ENCODE measurements at regions of chr2 and their contacts with region 1.

Region 1: DNA sequence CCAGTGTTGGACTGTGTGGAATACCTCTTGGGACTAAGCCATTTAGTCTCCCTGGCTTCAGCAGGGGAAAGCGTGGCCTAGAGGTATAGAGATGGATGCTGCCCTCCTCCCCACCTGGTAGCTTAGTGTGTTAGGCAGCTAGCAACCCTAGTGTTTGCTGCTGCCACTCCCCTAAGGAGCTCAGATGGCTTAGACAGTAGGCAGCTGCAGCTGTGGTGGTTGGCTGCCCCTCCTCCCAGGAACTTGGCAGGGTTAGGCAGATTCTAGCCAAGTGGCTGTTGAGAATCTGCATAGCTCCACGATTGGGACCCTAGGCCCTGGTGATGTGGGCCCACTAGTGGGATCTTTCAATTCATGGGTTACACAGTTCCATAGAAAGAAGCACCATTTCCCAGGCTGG is 550.4 kb upstream of the CHAC2 start:
- DNase-seq: no peak
- H3K4me3 ChIP-seq: no peak overlapping the region
- H3K27me3 ChIP-seq: no peaks in the 10 kb centered on the region
- CTCF ChIP-seq: no peak

Region 2: GRCh38 chr2:53188851-53189510 is 28.3 kb before region 1 on chr2:
- CTCF ChIA-PET with region 1: no interaction called
- POLR2A ChIA-PET with region 1: no interaction called
- DNase-seq: no peak
- H3K4me3 ChIP-seq: no peak overlapping the region
- H3K27me3 ChIP-seq: no peaks in the 10 kb centered on the region
- CTCF ChIP-seq: no peak

Region 3: GRCh38 chr2:54208364-54209240 is 991.4 kb after region 1 on chr2:
- CTCF ChIA-PET with region 1: no interaction called
- POLR2A ChIA-PET with region 1: interaction called, 11 read pairs
- DNase-seq: peak; percentile 39
- H3K4me3 ChIP-seq: no peak overlapping the region
- H3K27me3 ChIP-seq: no peaks in the 10 kb centered on the region
- CTCF ChIP-seq: no peak

Measured in BJ (cell line).